Dorsolateral prefrontal cortex (tissue), 120 donors: ENCODE measurements at regions of chr12 and their contacts with region 1.

Region 1: GRCh38 chr12:2477009-2477766 is 317.6 kb upstream of the FKBP4 start:
- DNase-seq: no peak
- H3K4me3 ChIP-seq: no peak overlapping the region
- H3K27ac ChIP-seq: peak overlapping the region in 1 of 59 donors; percentile 9
- H3K27me3 ChIP-seq: no peaks in the 10 kb centered on the region
- CTCF ChIP-seq: no peak

Region 2: GRCh38 chr12:2416158-2416557 is 61.0 kb before region 1 on chr12:
- intact Hi-C with region 1: loop called in 1 of 2 experiments (anchors 1 kb)
- DNase-seq: no peak
- H3K4me3 ChIP-seq: no peak overlapping the region
- H3K27ac ChIP-seq: no peak overlapping the region
- H3K27me3 ChIP-seq: no peaks in the 10 kb centered on the region
- CTCF ChIP-seq: no peak